Activated CD8-positive, alpha-beta T cell treated with anti-CD3 and anti-CD28 coated beads for 36 hours (primary cell): ENCODE measurements at regions of chr12 and their contacts with region 1.

Region 1: GRCh38 chr12:29317556-29318363 is 63.2 kb downstream of the ERGIC2 start:
- DNase-seq: peak; percentile 52
- ATAC-seq: peak; percentile 100
- H3K4me3 Mint-ChIP-seq: no peak overlapping the region
- H3K27ac Mint-ChIP-seq: no peak overlapping the region
- H3K4me1 Mint-ChIP-seq: peaks cover 10% of the 10 kb centered on the region
- H3K27me3 Mint-ChIP-seq: no peaks in the 10 kb centered on the region
- CTCF ChIP-seq: peak; percentile 92

Region 2: GRCh38 chr12:29088611-29089219 is 229.0 kb before region 1 on chr12:
- CTCF ChIA-PET with region 1: interaction called, 58 read pairs
- POLR2A ChIA-PET with region 1: interaction called, 5 read pairs
- intact Hi-C with region 1: loop called (anchors 5 kb)
- DNase-seq: no peak
- ATAC-seq: no peak
- H3K4me3 Mint-ChIP-seq: no peak overlapping the region
- H3K27ac Mint-ChIP-seq: no peak overlapping the region
- H3K4me1 Mint-ChIP-seq: no peaks in the 10 kb centered on the region
- H3K27me3 Mint-ChIP-seq: no peaks in the 10 kb centered on the region
- CTCF ChIP-seq: peak; percentile 62

Region 3: GRCh38 chr12:29176941-29177340 is 140.8 kb before region 1 on chr12:
- CTCF ChIA-PET with region 1: no interaction called
- POLR2A ChIA-PET with region 1: no interaction called
- intact Hi-C with region 1: no loop called
- DNase-seq: no peak
- ATAC-seq: no peak
- H3K4me3 Mint-ChIP-seq: no peak overlapping the region
- H3K27ac Mint-ChIP-seq: no peak overlapping the region
- H3K4me1 Mint-ChIP-seq: no peaks in the 10 kb centered on the region
- H3K27me3 Mint-ChIP-seq: no peaks in the 10 kb centered on the region
- CTCF ChIP-seq: no peak

Region 4: DNA sequence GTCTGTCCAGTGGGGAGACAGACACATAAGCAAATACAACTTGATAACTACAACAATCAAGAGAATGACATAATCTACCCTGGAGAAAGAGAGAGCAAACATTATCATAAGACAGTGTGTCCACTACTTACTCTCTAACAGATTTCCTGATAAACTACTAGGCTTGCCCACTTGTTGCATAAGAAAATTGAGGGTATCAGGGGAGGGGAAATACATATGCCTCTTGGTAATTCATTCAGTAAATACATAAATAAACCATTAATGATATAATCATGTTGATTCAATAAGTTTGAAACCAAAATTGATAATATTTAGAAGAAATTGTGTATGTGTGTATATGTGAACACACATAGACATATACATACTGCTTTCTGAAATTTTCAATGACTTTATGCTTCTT is 13.4 kb before region 1 on chr12:
- CTCF ChIA-PET with region 1: interaction called, 19 read pairs
- POLR2A ChIA-PET with region 1: interaction called, 3 read pairs
- intact Hi-C with region 1: no loop called
- DNase-seq: no peak
- ATAC-seq: no peak
- H3K4me3 Mint-ChIP-seq: no peak overlapping the region
- H3K27ac Mint-ChIP-seq: no peak overlapping the region
- H3K4me1 Mint-ChIP-seq: no peaks in the 10 kb centered on the region
- H3K27me3 Mint-ChIP-seq: no peaks in the 10 kb centered on the region
- CTCF ChIP-seq: no peak